Ovary (tissue), 10 donors: ENCODE measurements at regions of chr10 and their contacts with region 1.

Region 1: GRCh38 chr10:78224602-78225001 is 190.9 kb downstream of the RPS24 start:
- DNase-seq: no peak
- H3K4me3 ChIP-seq: no peak overlapping the region
- H3K27ac ChIP-seq: no peak overlapping the region
- H3K4me1 ChIP-seq: no peaks in the 10 kb centered on the region
- H3K27me3 ChIP-seq: no peaks in the 10 kb centered on the region
- CTCF ChIP-seq: no peak
- EP300 ChIP-seq: no peak
- POLR2A ChIP-seq: no peak

Region 2: DNA sequence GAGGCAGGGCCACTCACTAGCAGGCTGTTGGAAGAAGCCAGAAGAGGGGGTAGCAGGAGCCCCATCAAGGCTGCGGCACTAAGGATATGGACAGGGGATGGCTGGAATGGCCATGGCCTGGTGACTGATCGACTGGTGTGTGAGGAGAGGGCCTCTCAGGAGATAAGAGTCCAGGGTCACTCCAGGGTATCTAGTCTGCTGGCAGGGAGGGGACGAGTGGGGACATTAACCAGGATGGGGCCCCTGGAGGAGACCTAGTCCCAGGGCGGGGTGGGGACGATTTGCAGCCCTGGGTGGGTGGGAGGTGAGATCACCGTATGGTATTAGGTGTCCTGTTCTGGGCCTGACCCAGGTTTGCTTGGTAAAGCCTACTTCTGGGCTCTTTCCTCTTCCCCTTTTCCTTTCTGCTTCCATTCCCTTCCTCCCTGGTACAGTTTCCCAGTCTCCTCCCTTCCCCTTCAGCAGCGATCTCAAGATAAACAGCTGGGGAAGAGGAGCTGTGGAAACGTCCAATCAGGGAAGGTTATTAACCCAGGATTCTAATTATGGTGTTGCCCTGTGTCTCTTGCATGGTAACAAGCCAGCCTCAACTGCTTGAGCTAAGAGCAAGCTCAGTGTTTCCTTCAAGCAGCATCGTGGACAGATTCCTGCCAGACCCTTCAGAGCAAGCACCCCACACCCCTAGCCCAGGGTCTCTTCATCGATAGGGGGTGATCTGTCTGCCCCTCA is 42.3 kb after region 1 on chr10:
- intact Hi-C with region 1: no loop called
- DNase-seq: no peak
- H3K4me3 ChIP-seq: no peak overlapping the region
- H3K27ac ChIP-seq: no peak overlapping the region
- H3K4me1 ChIP-seq: no peaks in the 10 kb centered on the region
- H3K27me3 ChIP-seq: no peaks in the 10 kb centered on the region
- CTCF ChIP-seq: no peak
- EP300 ChIP-seq: no peak
- POLR2A ChIP-seq: no peak

Region 3: GRCh38 chr10:78623578-78624215 is 399.1 kb after region 1 on chr10:
- intact Hi-C with region 1: no loop called
- DNase-seq: no peak
- H3K4me3 ChIP-seq: no peak overlapping the region
- H3K27ac ChIP-seq: no peak overlapping the region
- H3K4me1 ChIP-seq: no peaks in the 10 kb centered on the region
- H3K27me3 ChIP-seq: no peaks in the 10 kb centered on the region
- CTCF ChIP-seq: no peak
- EP300 ChIP-seq: no peak
- POLR2A ChIP-seq: no peak

Region 4: DNA sequence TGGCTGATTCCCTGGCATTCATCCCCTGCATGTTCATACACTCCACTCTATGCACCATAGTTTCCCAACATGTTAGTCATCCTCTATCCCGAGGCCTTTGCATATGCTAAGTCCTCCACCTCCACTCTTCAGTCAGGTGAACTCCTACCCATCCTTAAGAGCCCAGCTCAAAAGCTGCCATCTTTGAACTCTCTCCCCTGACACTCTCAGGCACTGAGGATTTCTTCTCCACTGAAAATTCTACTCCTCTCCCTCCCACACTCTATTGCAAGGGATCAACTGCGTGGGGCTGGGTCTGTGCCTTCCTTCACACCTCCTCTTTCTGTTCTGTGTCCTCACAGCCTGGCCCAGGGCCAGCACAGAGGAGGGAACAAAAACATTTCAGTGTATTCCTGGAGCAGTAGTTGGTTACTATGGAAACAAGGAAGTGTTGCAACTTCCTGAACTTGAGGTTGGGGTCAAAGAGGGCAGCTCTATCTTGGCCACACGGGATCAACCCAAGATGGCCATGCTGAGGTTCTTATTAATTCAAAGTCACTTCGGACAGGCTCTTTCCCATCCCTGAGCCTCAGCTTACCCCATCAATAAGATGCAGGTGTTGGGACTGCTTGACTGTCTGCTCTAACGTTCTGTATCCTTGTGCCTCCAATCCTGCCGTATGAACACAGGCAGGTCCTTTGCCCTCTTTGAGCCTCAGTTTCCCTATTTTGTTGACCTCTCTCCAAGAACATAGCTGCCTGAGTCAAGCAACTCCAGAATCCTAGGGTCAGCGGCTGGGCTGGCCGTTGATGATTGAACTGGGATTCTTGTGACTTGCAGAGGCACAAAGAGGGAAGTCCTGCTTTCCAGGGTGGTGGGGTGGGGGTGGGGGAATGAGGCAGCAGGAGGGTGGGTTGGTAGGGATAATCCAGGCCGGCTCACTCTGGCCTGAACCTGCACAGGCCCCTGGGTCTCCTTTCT is 859.7 kb after region 1 on chr10:
- intact Hi-C with region 1: loop called in 1 of 4 experiments (anchors 10 kb)
- DNase-seq: peak; percentile 88 to 98 (median 94)
- H3K4me3 ChIP-seq: no peak overlapping the region
- H3K27ac ChIP-seq: peak overlapping the region; percentile 72 to 75
- H3K4me1 ChIP-seq: peaks cover 61% of the 10 kb centered on the region
- H3K27me3 ChIP-seq: no peaks in the 10 kb centered on the region
- CTCF ChIP-seq: no peak
- EP300 ChIP-seq: peak; percentile 53
- POLR2A ChIP-seq: no peak